ENCODE measurements at regions of chr1 and their contacts with region 1.

Region 1: GRCh38 chr1:107454791-107455190 is 314.0 kb downstream of the NTNG1 start:
- DNase-seq: peak in 2 of 3 donors; percentile 58 to 61
- H3K4me3 ChIP-seq: no peak overlapping the region
- H3K27ac ChIP-seq: no peak overlapping the region
- H3K4me1 ChIP-seq: peaks cover 0 to 7% (median 4%) of the 10 kb centered on the region in 4 experiments
- H3K27me3 ChIP-seq: no peaks in the 10 kb centered on the region

Region 2: GRCh38 chr1:107430540-107431228 is 24.1 kb before region 1 on chr1:
- CTCF ChIA-PET with region 1: interaction called, 12 read pairs
- POLR2A ChIA-PET with region 1: no interaction called
- DNase-seq: peak; percentile 50 to 58 (median 57)
- H3K4me3 ChIP-seq: no peak overlapping the region
- H3K27ac ChIP-seq: no peak overlapping the region
- H3K4me1 ChIP-seq: no peaks in the 10 kb centered on the region
- H3K27me3 ChIP-seq: no peaks in the 10 kb centered on the region